AG04450 (cell line): ENCODE measurements at regions of chr14 and their contacts with region 1.

Region 1: DNA sequence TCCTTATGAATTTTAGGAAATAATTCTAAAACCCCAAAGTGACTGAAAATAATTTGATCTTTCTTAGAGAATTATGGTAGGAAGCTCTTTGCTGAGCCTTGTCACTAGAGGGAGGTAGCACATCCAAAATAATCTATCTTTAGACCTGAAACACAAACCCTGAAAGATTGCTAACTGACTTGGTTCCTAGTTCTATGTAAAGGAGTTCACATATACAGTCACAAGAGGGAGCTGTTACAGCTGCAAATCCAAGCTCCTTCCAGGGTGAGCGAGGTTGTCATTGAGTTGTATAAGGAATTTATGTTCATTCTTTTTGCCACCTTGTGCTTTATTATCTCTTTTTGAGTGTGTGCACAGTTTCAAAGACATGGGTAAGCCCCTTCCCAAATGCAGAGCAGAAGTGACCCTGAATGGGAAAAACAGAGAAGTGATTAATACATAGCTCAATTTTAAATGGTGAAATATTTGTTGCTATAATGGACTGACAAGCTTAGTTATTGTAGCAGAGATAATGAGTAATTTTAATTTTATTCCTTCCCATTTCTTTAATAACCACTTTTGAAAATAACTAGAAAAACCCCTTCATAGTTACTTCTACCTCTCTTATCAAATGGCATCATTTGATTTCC is 387.9 kb downstream of the DAD1 start:
- DNase-seq: no peak
- H3K4me3 ChIP-seq: no peak overlapping the region
- H3K27ac ChIP-seq: no peak overlapping the region
- H3K27me3 ChIP-seq: no peaks in the 10 kb centered on the region
- CTCF ChIP-seq: peak; percentile 85

Region 2: GRCh38 chr14:21768116-21768874 is 432.8 kb before region 1 on chr14:
- CTCF ChIA-PET with region 1: no interaction called
- POLR2A ChIA-PET with region 1: no interaction called
- DNase-seq: no peak
- H3K4me3 ChIP-seq: no peak overlapping the region
- H3K27ac ChIP-seq: no peak overlapping the region
- H3K27me3 ChIP-seq: no peaks in the 10 kb centered on the region
- CTCF ChIP-seq: peak; percentile 39

Region 3: GRCh38 chr14:21917699-21918436 is 283.2 kb before region 1 on chr14:
- CTCF ChIA-PET with region 1: no interaction called
- POLR2A ChIA-PET with region 1: no interaction called
- DNase-seq: peak; percentile 8
- H3K4me3 ChIP-seq: no peak overlapping the region
- H3K27ac ChIP-seq: no peak overlapping the region
- H3K27me3 ChIP-seq: no peaks in the 10 kb centered on the region
- CTCF ChIP-seq: peak; percentile 86

Region 4: GRCh38 chr14:22168092-22168955 is 32.8 kb before region 1 on chr14:
- CTCF ChIA-PET with region 1: interaction called, 68 read pairs
- POLR2A ChIA-PET with region 1: no interaction called
- DNase-seq: no peak
- H3K4me3 ChIP-seq: no peak overlapping the region; the same call in 1 of the 2 replicates
- H3K27ac ChIP-seq: no peak overlapping the region
- H3K27me3 ChIP-seq: no peaks in the 10 kb centered on the region
- CTCF ChIP-seq: peak; percentile 42

Region 5: GRCh38 chr14:22190411-22191191 is 10.5 kb before region 1 on chr14:
- CTCF ChIA-PET with region 1: interaction called, 37 read pairs
- POLR2A ChIA-PET with region 1: interaction called, 3 read pairs
- DNase-seq: peak; percentile 98
- H3K4me3 ChIP-seq: no peak overlapping the region
- H3K27ac ChIP-seq: peak overlapping the region; percentile 95
- H3K27me3 ChIP-seq: no peaks in the 10 kb centered on the region
- CTCF ChIP-seq: no peak

Region 6: GRCh38 chr14:22252686-22253085 is 51.6 kb after region 1 on chr14:
- CTCF ChIA-PET with region 1: interaction called, 21 read pairs
- POLR2A ChIA-PET with region 1: no interaction called
- DNase-seq: no peak
- H3K4me3 ChIP-seq: no peak overlapping the region
- H3K27ac ChIP-seq: no peak overlapping the region
- H3K27me3 ChIP-seq: no peaks in the 10 kb centered on the region
- CTCF ChIP-seq: no peak

Region 7: GRCh38 chr14:22296722-22297121 is 95.6 kb after region 1 on chr14:
- CTCF ChIA-PET with region 1: interaction called, 24 read pairs
- POLR2A ChIA-PET with region 1: no interaction called
- DNase-seq: peak; percentile 65
- H3K4me3 ChIP-seq: no peak overlapping the region
- H3K27ac ChIP-seq: no peak overlapping the region
- H3K27me3 ChIP-seq: no peaks in the 10 kb centered on the region
- CTCF ChIP-seq: no peak

Region 8: GRCh38 chr14:22319526-22320361 is 118.7 kb after region 1 on chr14:
- CTCF ChIA-PET with region 1: interaction called, 23 read pairs
- POLR2A ChIA-PET with region 1: no interaction called
- DNase-seq: no peak
- H3K4me3 ChIP-seq: no peak overlapping the region
- H3K27ac ChIP-seq: no peak overlapping the region
- H3K27me3 ChIP-seq: peaks cover 13% of the 10 kb centered on the region
- CTCF ChIP-seq: peak; percentile 74

Region 9: GRCh38 chr14:22380571-22381407 is 179.7 kb after region 1 on chr14:
- CTCF ChIA-PET with region 1: interaction called, 42 read pairs
- POLR2A ChIA-PET with region 1: no interaction called
- DNase-seq: no peak
- H3K4me3 ChIP-seq: no peak overlapping the region
- H3K27ac ChIP-seq: no peak overlapping the region
- H3K27me3 ChIP-seq: peaks cover 3% of the 10 kb centered on the region
- CTCF ChIP-seq: no peak